ENCODE measurements at regions of chr11 and their contacts with region 1.

Region 1: GRCh38 chr11:46865340-46865739 is 19.3 kb upstream of the CKAP5 start:
- DNase-seq: no peak
- ATAC-seq: no peak
- H3K4me3 ChIP-seq: no peak overlapping the region
- H3K4me3 Mint-ChIP-seq: no peak overlapping the region
- H3K27ac ChIP-seq: no peak overlapping the region
- H3K27ac Mint-ChIP-seq: no peak overlapping the region
- H3K4me1 ChIP-seq: no peaks in the 10 kb centered on the region
- H3K4me1 Mint-ChIP-seq: no peaks in the 10 kb centered on the region
- H3K27me3 ChIP-seq: peaks cover 0 to 9% of the 10 kb centered on the region in 2 experiments
- H3K27me3 Mint-ChIP-seq: peaks cover 4 to 8% of the 10 kb centered on the region in 2 donors

Region 2: GRCh38 chr11:46808799-46809431 is 56.4 kb before region 1 on chr11:
- CTCF ChIA-PET with region 1: no interaction called
- POLR2A ChIA-PET with region 1: no interaction called
- DNase-seq: peak in 1 of 35 experiments; percentile 31
- ATAC-seq: peak in 2 of 4 experiments; percentile 47 to 55
- H3K4me3 ChIP-seq: no peak overlapping the region
- H3K4me3 Mint-ChIP-seq: no peak overlapping the region
- H3K27ac ChIP-seq: no peak overlapping the region
- H3K27ac Mint-ChIP-seq: no peak overlapping the region
- H3K4me1 ChIP-seq: no peaks in the 10 kb centered on the region
- H3K4me1 Mint-ChIP-seq: peaks cover 0 to 3% (median 3%) of the 10 kb centered on the region in 3 donors
- H3K27me3 ChIP-seq: no peaks in the 10 kb centered on the region
- H3K27me3 Mint-ChIP-seq: no peaks in the 10 kb centered on the region

Region 3: DNA sequence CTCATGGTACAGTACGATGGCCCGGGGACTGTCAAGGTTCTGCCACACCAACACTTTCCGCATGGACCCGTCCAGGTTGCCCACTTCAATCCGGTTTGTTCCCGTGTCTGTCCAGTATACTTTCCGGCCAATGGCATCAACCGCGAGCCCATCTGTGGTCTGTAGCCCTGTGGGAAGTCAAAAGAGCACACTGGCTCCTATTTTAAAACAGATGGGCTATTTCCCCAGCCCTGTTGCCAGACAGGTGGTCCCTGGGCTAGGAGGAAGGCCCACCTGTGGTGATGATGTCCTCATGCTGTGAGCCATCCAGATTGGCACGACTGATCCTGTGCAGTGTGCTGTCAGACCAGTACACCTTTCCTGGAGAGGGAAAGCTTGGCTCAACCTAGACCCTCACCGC is 11.1 kb after region 1 on chr11:
- CTCF ChIA-PET with region 1: interaction called in 1 of 2 experiments, 11 read pairs
- POLR2A ChIA-PET with region 1: no interaction called
- DNase-seq: no peak
- ATAC-seq: no peak
- H3K4me3 ChIP-seq: no peak overlapping the region
- H3K4me3 Mint-ChIP-seq: no peak overlapping the region
- H3K27ac ChIP-seq: no peak overlapping the region
- H3K27ac Mint-ChIP-seq: no peak overlapping the region
- H3K4me1 ChIP-seq: no peaks in the 10 kb centered on the region
- H3K4me1 Mint-ChIP-seq: no peaks in the 10 kb centered on the region
- H3K27me3 ChIP-seq: peaks cover 0 to 27% of the 10 kb centered on the region in 2 experiments
- H3K27me3 Mint-ChIP-seq: peaks cover 4 to 5% of the 10 kb centered on the region in 2 donors

Region 4: GRCh38 chr11:46889689-46890475 is 24.5 kb after region 1 on chr11:
- CTCF ChIA-PET with region 1: no interaction called
- POLR2A ChIA-PET with region 1: no interaction called
- DNase-seq: peak; percentile 33 to 87 (median 65)
- ATAC-seq: peak; percentile 81 to 86 (median 84)
- H3K4me3 ChIP-seq: no peak overlapping the region
- H3K4me3 Mint-ChIP-seq: no peak overlapping the region
- H3K27ac ChIP-seq: no peak overlapping the region
- H3K27ac Mint-ChIP-seq: no peak overlapping the region
- H3K4me1 ChIP-seq: peaks cover 0 to 3% of the 10 kb centered on the region in 2 experiments
- H3K4me1 Mint-ChIP-seq: no peaks in the 10 kb centered on the region
- H3K27me3 ChIP-seq: peaks cover 0 to 16% of the 10 kb centered on the region in 2 experiments
- H3K27me3 Mint-ChIP-seq: peaks cover 5 to 7% of the 10 kb centered on the region in 2 donors

Measured in T-cell (primary cell).